Activated naive CD4-positive, alpha-beta T cell treated with anti-CD3 and anti-CD28 coated beads for 36 hours (primary cell): ENCODE measurements at regions of chr2 and their contacts with region 1.

Region 1: DNA sequence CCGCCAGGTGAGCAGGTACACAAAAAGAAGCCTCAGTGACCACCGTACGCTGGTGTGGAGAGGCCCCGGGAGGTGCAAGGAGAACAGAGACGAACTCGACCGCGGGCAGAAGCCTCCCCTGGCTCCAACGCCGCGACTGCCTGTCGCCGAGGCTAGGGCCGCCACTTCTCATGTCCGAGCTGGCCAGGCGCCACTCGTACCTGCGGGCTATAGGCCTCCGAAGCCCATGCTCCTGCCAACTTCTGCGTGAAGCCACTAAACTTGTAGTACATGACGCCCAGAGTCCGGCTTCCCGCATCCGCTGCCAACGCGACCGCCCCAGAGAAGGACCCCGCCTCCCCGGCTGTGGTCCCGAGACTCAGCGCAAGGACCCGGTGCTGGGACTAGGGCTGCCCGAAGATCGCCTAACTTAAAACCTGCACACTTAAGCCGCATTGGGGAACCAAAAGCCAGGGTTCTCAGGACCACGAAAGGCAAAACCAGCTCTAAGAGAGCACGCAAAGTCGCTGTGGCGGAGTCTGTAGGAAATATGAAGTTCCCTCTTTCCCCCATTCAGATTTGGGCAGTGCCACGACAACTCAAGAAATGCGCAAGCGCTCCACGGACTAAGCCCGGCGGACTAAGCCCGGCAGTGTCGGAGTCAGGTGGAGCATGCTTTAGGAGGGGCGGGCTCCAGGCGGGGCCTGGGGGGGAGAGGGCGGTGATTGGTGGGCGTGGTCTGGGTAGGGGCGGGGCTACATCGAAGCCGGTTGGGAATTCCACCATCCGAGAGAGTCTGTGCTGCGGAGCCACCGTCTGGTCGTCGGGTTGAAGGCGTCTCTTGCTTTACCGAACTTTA is at the start of gene COX7A2L:
- DNase-seq: peak; percentile 98
- H3K4me3 Mint-ChIP-seq: peak within 1 kb of the TSS; percentile 83
- H3K27ac Mint-ChIP-seq: peak within 1 kb of the TSS; percentile 98
- H3K4me1 Mint-ChIP-seq: peaks cover 42% of the 10 kb centered on the region
- H3K27me3 Mint-ChIP-seq: no peaks in the 10 kb centered on the region
- total RNA-seq, gene COX7A2L: 150 to 152 TPM

Region 2: DNA sequence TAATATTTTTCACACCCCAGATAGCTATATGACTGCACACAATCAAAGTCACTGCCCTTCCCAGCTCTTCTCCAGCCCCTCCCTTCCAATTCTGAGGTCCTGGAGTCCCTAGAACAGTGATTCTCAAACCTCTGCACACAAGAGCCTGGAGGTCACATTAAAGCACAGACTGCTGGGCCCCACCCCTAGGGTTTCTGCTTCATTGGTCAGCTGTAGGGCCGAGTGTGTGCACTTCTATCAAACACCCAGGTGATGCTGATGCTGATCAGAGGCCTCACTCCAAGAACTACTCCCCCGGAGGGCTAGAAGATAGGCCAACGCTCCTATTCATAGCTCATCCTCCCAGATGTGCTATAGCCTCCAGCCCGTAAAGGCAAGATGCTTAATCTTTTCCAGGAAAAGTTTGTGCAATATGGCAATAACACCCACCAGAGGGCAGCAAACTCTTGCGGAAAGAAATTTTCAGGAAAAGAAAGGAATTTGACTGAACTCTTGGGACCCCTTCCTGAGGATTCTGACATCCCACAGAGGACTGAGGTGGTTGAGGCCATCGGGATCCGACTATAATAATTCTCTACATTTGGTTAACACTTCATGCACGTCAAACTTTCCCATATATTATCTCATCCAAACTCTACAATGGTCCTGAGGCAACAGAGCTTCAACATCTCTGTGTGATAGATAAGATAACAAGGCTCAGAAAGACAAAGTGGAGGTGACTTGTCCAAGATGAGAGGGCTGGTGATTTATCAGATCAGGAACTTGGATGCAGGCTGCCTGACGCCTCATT is 507.5 kb before region 1 on chr2:
- CTCF ChIA-PET with region 1: no interaction called
- intact Hi-C with region 1: loop called (anchors 1 kb)
- DNase-seq: peak; percentile 27
- H3K4me3 Mint-ChIP-seq: no peak overlapping the region
- H3K27ac Mint-ChIP-seq: no peak overlapping the region
- H3K4me1 Mint-ChIP-seq: peaks cover 17% of the 10 kb centered on the region
- H3K27me3 Mint-ChIP-seq: peaks cover 16% of the 10 kb centered on the region

Region 3: GRCh38 chr2:42102024-42102590 is 259.0 kb before region 1 on chr2:
- CTCF ChIA-PET with region 1: no interaction called
- intact Hi-C with region 1: loop called (anchors 1 kb)
- DNase-seq: peak; percentile 86
- H3K4me3 Mint-ChIP-seq: peak overlapping the region; percentile 70
- H3K27ac Mint-ChIP-seq: peak overlapping the region; percentile 88
- H3K4me1 Mint-ChIP-seq: peaks cover 55% of the 10 kb centered on the region
- H3K27me3 Mint-ChIP-seq: no peaks in the 10 kb centered on the region

Region 4: GRCh38 chr2:42256505-42256904 is 104.6 kb before region 1 on chr2:
- CTCF ChIA-PET with region 1: no interaction called
- intact Hi-C with region 1: no loop called
- DNase-seq: peak; percentile 26
- H3K4me3 Mint-ChIP-seq: no peak overlapping the region
- H3K27ac Mint-ChIP-seq: peak overlapping the region; percentile 54
- H3K4me1 Mint-ChIP-seq: peaks cover 44% of the 10 kb centered on the region
- H3K27me3 Mint-ChIP-seq: no peaks in the 10 kb centered on the region

Region 5: GRCh38 chr2:42296226-42296625 is 64.9 kb before region 1 on chr2:
- CTCF ChIA-PET with region 1: no interaction called
- intact Hi-C with region 1: loop called (anchors 1 kb)
- DNase-seq: peak; percentile 11
- H3K4me3 Mint-ChIP-seq: no peak overlapping the region
- H3K27ac Mint-ChIP-seq: peak overlapping the region; percentile 71
- H3K4me1 Mint-ChIP-seq: peaks cover 44% of the 10 kb centered on the region
- H3K27me3 Mint-ChIP-seq: no peaks in the 10 kb centered on the region

Region 6: DNA sequence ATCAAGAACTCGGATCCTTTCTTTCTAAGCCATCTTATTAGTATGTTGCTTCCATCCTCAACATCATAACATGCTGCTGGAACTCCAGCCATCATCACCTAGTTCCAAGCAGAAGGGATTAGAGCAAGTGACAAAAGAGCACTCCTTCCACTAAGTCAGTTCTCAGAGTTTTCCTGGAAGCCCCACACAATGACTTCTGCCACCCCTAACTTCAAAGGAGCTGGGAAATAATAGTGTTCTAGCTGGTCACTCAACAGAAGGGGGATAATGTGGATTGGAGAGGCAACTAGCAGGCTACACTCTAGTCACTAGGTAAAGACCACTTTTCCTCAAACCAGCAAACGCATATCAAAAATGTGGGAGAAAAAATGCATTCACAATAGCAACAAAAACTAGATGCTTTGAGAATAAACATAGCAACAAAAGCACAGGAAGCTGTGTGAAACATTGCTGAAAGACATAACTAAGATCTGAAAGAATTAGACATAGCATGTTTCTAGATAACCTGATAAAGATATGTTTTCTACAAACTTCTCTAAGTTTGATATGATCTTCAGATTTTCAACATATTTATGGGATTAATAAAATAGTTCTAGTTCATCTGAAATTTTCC is 39.6 kb before region 1 on chr2:
- CTCF ChIA-PET with region 1: no interaction called
- intact Hi-C with region 1: no loop called
- DNase-seq: no peak
- H3K4me3 Mint-ChIP-seq: no peak overlapping the region
- H3K27ac Mint-ChIP-seq: peak overlapping the region; percentile 59
- H3K4me1 Mint-ChIP-seq: peaks cover 18% of the 10 kb centered on the region
- H3K27me3 Mint-ChIP-seq: no peaks in the 10 kb centered on the region

Region 7: DNA sequence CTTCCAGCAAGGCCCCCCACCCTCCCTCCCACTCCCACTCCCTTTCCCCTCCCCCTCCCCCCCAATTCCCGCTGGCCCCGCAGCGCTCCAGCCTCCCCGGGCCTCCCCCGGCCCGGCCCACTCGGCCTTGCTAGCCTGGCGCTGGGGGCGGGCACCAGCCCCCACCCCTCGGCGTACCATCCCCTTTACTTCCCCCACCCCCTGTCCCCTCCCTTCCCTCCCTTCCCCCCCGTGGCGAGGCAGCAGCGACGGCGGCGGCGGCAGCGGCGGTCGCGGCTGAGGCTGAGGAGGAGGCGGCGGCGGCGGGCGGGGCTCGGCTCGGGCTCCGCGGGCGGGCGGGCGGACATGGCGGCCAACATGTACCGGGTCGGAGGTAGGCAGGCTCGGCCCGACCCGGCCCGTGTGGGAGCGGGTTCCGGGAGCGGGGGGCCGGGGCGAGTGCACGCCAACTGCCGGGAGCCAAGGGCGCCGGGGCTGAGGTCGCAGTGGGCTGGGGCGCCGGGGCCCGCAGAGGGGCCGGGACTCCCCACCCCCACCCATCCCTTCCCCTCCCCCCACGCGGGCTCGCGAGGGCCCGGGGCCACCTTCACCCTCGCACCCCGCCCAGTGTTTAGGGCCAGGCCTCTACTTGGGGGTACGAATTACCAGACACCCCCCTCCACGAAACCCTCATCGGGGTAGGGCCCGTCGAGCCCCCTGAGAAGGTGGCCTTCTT is 207.4 kb after region 1 on chr2 and contains the start of gene MTA3:
- CTCF ChIA-PET with region 1: no interaction called
- intact Hi-C with region 1: loop called (anchors 2 kb)
- DNase-seq: peak; percentile 66
- H3K4me3 Mint-ChIP-seq: peak within 1 kb of the TSS; percentile 88
- H3K27ac Mint-ChIP-seq: peak within 1 kb of the TSS; percentile 90
- H3K4me1 Mint-ChIP-seq: peaks cover 26% of the 10 kb centered on the region
- H3K27me3 Mint-ChIP-seq: no peaks in the 10 kb centered on the region
- total RNA-seq, gene MTA3: 31.9 to 38.0 TPM

Region 8: GRCh38 chr2:42810121-42810970 is 449.2 kb after region 1 on chr2:
- CTCF ChIA-PET with region 1: no interaction called
- intact Hi-C with region 1: loop called (anchors 1 kb)
- DNase-seq: peak; percentile 96
- H3K4me3 Mint-ChIP-seq: peak overlapping the region; percentile 88
- H3K27ac Mint-ChIP-seq: peak overlapping the region; percentile 93
- H3K4me1 Mint-ChIP-seq: peaks cover 11% of the 10 kb centered on the region
- H3K27me3 Mint-ChIP-seq: no peaks in the 10 kb centered on the region